Activated T-helper 1 cell treated with anti-CD3 and anti-CD28 coated beads, Interleukin-12 subunit alpha, Interleukin-12 subunit beta, Interleukin-2, Interleukin-4 antibody, amounts not matched to agents 30 ng/mL and 10 ng/mL and 1 ng/mL, durations not matched to agents 14 hours and 24 hours and 36 hours (primary cell): ENCODE measurements at regions of chr1 and their contacts with region 1.

Region 1: DNA sequence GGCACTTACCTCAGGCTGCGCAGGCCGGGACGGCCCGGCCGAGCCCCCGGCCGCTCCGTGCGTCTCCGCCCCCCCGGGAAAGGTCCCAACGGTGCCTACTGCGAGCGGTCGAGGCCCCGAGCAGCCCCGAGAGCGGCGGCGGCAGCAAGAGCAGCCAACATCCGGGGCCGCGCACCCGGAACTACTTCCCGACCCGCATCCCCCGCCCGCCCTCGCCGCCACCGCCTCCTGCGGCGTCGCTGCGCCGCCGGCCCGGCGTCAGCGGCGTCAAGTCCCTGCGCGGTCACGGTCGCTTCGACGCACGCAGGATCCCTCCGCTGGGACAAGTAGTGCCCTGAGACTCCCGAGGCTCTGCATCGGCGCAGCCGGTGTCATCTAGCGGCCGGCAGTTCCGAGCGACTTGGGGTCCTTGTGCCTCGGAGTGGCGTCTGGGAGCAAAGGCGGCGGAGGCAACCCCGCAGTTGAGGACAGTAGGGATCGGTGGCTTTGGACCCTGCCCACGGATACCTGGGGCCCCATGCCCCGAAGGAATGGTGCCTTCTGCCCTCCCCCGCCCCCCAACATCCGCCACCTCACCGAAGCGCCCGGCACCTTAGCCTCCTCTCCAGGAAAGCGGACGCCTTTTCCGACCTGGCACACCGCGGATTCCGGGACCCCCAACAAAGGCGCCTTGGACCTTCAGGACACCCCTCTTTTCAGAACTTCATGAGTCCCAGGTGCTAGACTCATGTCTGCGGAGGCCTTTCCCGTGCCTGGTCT is at the start of gene FOXJ3:
- DNase-seq: peak; percentile 87
- H3K4me3 Mint-ChIP-seq: peak within 1 kb of the TSS; percentile 90
- H3K27ac Mint-ChIP-seq: peak within 1 kb of the TSS; percentile 91
- H3K4me1 Mint-ChIP-seq: peaks cover 47% of the 10 kb centered on the region
- H3K27me3 Mint-ChIP-seq: no peaks in the 10 kb centered on the region
- total RNA-seq, gene FOXJ3: 50.1 and 51.6 TPM in 2 replicates

Region 2: DNA sequence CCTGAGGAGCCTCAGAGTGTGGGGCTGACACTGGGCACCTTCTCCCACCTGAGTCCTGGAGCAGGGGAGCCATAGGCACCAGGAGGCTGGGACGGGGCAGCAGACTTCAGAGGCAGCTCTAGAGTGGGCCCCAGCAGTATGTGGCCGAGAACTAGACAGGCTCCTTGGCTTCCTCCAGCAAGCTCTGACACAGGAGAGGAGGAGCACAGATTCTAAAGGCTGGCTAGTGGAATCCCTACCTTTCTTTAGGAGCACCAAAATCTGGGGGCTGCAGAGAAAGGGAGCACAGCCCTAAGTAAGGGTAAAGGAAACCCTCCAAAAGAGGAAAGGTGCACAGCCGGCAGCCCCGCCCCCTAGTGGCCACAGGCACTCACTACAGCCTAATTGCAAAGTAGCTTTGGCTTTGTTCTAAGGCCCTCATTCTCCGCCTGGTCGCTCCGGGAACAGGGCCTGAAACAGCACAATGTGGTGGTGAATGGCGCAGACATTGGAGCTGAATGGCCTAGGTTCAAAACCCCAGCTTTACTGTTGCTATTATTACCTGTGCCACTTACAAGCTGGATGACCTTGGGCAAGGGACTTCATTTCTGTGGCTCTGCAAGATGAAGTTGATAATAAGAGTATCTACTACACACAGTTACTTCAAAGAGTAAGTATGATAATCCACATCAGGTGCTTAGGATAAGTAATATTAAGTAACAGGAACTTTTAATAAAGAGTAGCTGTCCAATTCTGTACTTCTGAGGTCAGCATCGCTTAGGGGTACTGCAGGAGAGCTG is 161.9 kb before region 1 on chr1:
- intact Hi-C with region 1: loop called (anchors 1 kb)
- DNase-seq: peak; percentile 35
- H3K4me3 Mint-ChIP-seq: no peak overlapping the region
- H3K27ac Mint-ChIP-seq: no peak overlapping the region
- H3K4me1 Mint-ChIP-seq: no peaks in the 10 kb centered on the region
- H3K27me3 Mint-ChIP-seq: no peaks in the 10 kb centered on the region

Region 3: DNA sequence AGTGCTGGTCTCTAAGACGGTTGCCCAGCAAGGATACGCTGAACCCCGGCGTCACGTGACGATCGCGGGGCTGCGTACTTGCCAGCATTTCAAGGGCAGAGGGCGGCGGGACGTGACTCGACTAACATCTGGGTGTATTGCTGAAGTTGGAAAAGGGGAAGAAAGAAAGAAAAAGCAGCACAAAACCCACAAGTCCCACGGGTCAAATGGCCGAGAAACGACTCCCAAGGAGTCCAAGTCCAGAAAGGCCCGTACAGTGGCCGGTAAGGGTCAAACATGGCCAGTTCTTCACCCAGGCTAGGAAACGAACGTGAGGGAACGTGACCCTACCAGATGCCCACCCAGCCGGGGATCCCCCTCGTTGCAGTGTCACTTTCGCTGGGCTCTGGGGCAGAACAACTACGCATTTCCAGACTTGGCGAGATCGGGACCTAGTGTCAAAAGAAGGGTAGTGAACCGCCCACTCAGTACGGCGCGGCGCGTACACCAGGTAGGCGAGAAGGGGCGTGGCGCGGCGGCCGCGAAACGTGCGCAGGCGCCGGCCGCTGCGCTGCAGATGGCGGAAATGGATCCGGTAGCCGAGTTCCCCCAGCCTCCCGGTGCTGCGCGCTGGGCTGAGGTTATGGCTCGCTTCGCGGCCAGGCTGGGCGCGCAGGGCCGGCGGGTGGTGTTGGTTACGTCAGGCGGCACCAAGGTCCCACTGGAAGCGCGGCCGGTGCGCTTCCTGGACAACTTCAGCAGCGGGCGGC is 121.0 kb after region 1 on chr1 and contains the starts of genes PPCS and ZMYND12:
- intact Hi-C with region 1: loop called (anchors 1 kb)
- DNase-seq: peak; percentile 87
- H3K4me3 Mint-ChIP-seq: peak within 1 kb of the TSS; percentile 95
- H3K27ac Mint-ChIP-seq: peak within 1 kb of the TSS; percentile 98
- H3K4me1 Mint-ChIP-seq: peaks cover 28% of the 10 kb centered on the region
- H3K27me3 Mint-ChIP-seq: no peaks in the 10 kb centered on the region
- total RNA-seq, gene PPCS: 40.1 and 48.0 TPM in 2 replicates
- total RNA-seq, gene ZMYND12: not detected in 2 replicates

Region 4: DNA sequence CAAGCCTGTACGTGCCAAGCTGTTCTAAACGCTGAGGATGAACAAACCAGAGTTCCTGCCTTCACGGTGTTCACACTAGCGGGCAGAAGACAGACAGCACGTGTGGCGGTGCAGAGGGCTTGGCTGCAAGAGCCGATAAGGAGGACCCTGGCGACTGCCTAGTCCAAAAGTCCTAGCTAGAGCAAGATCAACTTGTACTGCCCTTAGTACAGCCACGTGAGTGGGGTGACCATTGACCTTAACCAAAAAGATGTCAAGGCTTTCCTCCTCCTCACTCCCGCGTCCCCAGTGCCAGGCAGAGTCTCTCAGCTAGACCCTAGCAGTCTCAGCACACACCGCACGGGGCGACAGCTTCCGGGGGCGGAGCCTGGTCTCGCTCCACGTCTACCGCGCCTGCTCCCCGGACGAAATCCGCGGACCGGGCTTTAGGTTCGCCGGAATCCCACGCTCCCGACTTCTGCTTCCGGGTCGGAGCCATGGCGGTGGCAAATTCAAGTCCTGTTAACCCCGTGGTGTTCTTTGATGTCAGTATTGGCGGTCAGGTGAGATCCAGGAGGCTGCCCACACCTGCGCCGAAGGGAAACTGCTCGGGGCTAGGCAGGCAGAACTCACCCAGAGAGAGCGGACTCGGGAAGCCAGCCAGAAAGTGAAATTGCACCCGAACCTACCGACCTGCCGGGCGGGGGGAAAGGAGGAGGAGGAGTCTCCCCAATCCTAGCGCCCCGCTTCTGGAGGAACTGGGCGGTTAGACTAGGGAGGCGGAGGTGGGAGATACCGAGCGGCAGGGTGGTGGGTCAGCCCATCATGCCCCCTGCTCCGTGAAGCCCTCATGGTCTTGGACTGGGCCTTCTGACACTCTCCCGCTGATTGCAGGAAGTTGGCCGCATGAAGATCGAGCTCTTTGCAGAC is 323.0 kb after region 1 on chr1 and contains the start of gene PPIH:
- intact Hi-C with region 1: loop called (anchors 5 kb)
- DNase-seq: peak; percentile 94
- H3K4me3 Mint-ChIP-seq: peak within 1 kb of the TSS; percentile 99
- H3K27ac Mint-ChIP-seq: peak within 1 kb of the TSS; percentile 96
- H3K4me1 Mint-ChIP-seq: peaks cover 46% of the 10 kb centered on the region
- H3K27me3 Mint-ChIP-seq: peaks cover 3% of the 10 kb centered on the region
- total RNA-seq, gene PPIH: 89.7 and 94.6 TPM in 2 replicates

Region 5: GRCh38 chr1:42674214-42674613 is 339.0 kb after region 1 on chr1:
- intact Hi-C with region 1: no loop called
- DNase-seq: no peak
- H3K4me3 Mint-ChIP-seq: no peak overlapping the region
- H3K27ac Mint-ChIP-seq: no peak overlapping the region
- H3K4me1 Mint-ChIP-seq: peaks cover 6% of the 10 kb centered on the region
- H3K27me3 Mint-ChIP-seq: no peaks in the 10 kb centered on the region

Region 6: DNA sequence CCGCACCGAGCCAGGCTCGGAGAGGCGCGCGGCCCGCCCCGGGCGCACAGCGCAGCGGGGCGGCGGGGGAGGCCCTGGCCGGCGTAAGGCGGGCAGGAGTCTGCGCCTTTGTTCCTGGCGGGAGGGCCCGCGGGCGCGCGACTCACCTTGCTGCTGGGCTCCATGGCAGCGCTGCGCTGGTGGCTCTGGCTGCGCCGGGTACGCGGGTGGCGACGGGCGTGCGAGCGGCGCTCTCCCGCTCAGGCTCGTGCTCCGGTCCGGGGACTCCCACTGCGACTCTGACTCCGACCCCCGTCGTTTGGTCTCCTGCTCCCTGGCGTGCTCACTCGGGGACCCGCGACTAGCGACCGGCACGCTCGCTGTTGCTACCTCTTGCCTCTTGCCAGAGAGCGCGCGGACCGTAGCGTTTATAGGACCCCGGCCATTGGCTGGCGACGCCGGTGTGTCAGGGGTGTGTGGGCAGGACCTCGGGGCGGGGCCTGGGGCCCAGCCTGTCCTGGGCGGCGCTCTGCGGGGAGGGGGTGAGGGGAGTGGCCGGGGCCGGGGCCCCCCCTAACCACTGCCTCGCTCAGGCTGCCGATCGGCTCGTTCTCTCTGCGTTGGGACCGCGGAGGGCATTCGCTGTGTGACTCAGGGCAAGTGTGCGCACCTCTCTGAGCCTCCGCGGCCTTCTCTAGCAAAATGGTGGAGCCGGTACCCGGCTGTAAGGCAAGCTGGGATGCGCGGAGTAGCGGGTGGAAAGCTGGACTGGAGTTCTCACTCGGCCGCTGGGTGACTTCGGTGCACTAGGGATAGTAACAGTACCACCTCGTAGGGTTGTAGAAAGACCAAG is 623.5 kb after region 1 on chr1 and contains the start of gene SLC2A1:
- intact Hi-C with region 1: loop called (anchors 10 kb)
- DNase-seq: peak; percentile 93
- H3K4me3 Mint-ChIP-seq: peak within 1 kb of the TSS; percentile 97
- H3K27ac Mint-ChIP-seq: peak within 1 kb of the TSS; percentile 100
- H3K4me1 Mint-ChIP-seq: peaks cover 51% of the 10 kb centered on the region
- H3K27me3 Mint-ChIP-seq: peaks cover 6% of the 10 kb centered on the region
- total RNA-seq, gene SLC2A1: 111 and 120 TPM in 2 replicates